Tibial artery (tissue), 4 donors: ENCODE measurements at regions of chr1 and their contacts with region 1.

Region 1: GRCh38 chr1:161956097-161956496 is 67.6 kb downstream of the OLFML2B start:
- DNase-seq: no peak
- H3K4me3 ChIP-seq: no peak overlapping the region
- H3K27ac ChIP-seq: no peak overlapping the region
- H3K4me1 ChIP-seq: peaks cover 0 to 31% (median 6%) of the 10 kb centered on the region in 4 donors
- H3K27me3 ChIP-seq: no peaks in the 10 kb centered on the region
- CTCF ChIP-seq: no peak

Region 2: GRCh38 chr1:161905269-161905884 is 50.7 kb before region 1 on chr1:
- intact Hi-C with region 1: loop called (anchors 10 kb)
- DNase-seq: no peak
- H3K4me3 ChIP-seq: no peak overlapping the region
- H3K27ac ChIP-seq: no peak overlapping the region
- H3K4me1 ChIP-seq: peaks cover 0 to 38% (median 9%) of the 10 kb centered on the region in 4 donors
- H3K27me3 ChIP-seq: no peaks in the 10 kb centered on the region
- CTCF ChIP-seq: peak; percentile 17 to 29

Region 3: DNA sequence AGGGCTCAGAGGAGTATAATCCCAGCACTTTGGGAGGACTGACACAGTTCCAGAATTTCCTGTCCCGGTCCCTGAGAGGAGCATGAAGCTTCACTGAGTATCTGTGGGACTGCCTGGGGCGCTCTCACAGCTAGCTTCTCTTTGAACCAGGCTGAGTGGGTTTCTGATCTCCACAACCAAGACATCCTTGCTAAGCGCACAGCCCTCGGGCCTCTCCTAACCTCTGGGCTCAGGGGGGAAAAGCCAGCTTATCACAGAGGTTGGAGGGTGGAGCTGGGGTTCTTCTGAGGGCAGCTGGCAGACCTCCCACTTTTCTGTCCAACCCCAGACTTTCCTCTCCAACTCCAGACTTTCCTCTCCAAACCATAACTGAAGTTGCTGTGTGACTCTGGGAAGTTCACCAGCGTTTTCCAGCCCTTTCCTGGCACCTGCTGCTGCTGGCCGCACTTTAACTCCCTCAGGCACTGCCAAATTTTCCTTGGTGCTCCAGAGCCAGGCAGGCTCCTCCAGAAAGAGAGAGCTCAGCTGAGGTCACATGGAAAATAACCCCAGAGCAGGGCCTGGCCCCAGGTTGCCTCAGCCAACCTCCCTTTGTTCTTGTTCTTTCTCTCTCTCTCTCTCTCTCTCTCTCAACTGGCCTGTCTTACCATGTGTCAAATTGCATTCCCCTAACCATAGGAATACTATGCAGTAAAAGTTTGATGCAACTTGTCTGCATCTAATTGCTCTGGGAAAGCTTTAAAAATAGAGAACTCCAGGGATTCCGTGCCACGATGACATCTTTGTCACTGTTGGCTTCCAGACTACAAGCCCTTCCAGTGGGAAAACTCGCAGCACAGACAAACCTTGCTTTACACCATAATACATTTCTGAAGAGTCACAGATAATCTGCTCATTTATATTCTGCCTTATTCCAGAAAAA is 18.1 kb after region 1 on chr1:
- intact Hi-C with region 1: no loop called
- DNase-seq: peak in 1 of 2 donors; percentile 85
- H3K4me3 ChIP-seq: no peak overlapping the region
- H3K27ac ChIP-seq: peak overlapping the region; percentile 54 to 79
- H3K4me1 ChIP-seq: peaks cover 0 to 46% (median 28%) of the 10 kb centered on the region in 4 donors
- H3K27me3 ChIP-seq: no peaks in the 10 kb centered on the region
- CTCF ChIP-seq: no peak